Prostate gland (tissue), 2 donors: ENCODE measurements at regions of chr4 and their contacts with region 1.

Region 1: DNA sequence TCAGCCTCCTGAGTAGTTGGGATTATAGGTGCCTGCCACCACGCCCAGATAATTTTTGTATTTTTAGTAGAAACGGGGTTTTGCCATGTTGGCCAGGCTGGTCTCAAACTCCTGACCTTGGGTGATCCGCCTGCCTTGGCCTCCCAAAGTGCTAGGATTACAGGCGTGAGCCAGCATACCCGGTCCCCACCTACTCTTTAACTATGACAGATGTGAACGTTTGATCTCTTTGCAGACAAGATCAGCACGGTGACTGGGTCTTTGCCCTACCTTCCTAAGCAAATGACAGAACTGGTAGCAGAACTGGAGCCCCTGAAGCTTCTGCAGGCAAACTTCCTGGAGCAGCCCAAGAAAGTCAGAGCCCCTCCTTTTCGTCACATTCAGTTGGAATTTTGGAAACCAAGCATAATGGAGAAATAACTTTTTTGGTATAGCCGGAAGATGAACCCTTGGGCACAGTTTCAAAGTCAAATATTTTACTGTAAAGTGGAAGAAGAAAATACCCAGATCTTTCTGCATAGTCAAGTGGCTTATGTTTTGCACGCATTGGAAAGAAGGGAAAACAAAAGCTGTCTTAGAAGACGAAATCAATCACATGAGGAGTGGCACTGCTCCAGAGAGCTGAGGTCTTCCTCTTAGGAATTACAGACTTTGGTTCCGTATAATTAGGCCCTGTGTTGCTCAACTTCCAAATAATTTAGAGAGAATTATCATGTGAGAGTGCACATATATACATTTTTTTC is 90.6 kb downstream of the SORBS2 start:
- DNase-seq: no peak
- H3K4me3 ChIP-seq: no peak overlapping the region
- H3K27ac ChIP-seq: peak overlapping the region; percentile 61 to 64
- H3K4me1 ChIP-seq: peaks cover 6% of the 10 kb centered on the region
- H3K27me3 ChIP-seq: no peaks in the 10 kb centered on the region
- CTCF ChIP-seq: no peak
- POLR2A ChIP-seq: no peak

Region 2: DNA sequence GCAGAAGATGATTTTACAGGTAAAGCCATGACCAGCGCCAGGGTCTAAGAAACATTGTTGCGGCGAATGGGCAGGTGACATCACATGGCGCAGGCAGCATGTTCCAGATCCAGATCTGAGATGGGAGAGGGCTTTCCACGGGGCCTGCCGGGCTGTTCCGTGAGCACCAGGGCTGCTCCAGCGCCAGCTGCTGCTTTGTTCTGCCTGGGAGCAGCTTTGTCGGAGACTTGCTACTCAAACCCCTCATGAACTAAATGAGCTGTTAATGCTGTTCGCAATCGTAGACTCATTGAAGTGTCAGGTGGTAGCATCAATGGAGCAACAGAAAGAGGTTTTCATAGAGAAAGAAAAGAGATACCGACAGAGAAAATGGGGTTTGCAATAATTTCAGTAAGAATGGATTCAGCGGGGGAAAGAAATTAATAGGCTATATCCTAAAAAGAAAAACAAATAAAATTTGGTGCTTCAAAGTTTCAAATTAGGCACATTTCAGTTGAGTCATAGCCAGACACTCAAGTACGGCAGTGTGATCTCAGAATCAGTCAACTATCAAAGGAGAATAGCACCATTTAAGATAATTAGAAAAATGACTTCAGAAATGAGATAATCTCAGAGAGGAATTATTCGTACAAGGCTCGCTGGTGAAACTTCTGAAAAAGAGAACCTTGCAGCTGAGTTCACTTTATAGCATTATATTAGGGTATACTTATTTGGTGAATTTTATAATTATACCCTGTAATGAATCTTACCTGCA is 66.7 kb after region 1 on chr4:
- intact Hi-C with region 1: loop called (anchors 5 kb)
- DNase-seq: no peak
- H3K4me3 ChIP-seq: no peak overlapping the region
- H3K27ac ChIP-seq: no peak overlapping the region
- H3K4me1 ChIP-seq: no peaks in the 10 kb centered on the region
- H3K27me3 ChIP-seq: no peaks in the 10 kb centered on the region
- CTCF ChIP-seq: no peak
- POLR2A ChIP-seq: no peak

Region 3: GRCh38 chr4:185811509-185812364 is 90.4 kb after region 1 on chr4 and contains the start of gene SORBS2:
- intact Hi-C with region 1: loop called (anchors 5 kb)
- DNase-seq: peak; percentile 76
- H3K4me3 ChIP-seq: peak within 1 kb of the TSS; percentile 35 to 42
- H3K27ac ChIP-seq: peak within 1 kb of the TSS; percentile 67 to 74
- H3K4me1 ChIP-seq: no peaks in the 10 kb centered on the region
- H3K27me3 ChIP-seq: no peaks in the 10 kb centered on the region
- CTCF ChIP-seq: no peak
- POLR2A ChIP-seq: peak; percentile 21
- total RNA-seq, gene SORBS2: 175 to 242 TPM